IMR-90 (cell line): ENCODE measurements at regions of chr15 and their contacts with region 1.

Region 1: GRCh38 chr15:57138349-57138788 is 219.9 kb downstream of the TCF12 start:
- DNase-seq: peak; percentile 82
- ATAC-seq: peak; percentile 85
- H3K4me3 ChIP-seq: no peak overlapping the region
- H3K27ac ChIP-seq: no peak overlapping the region
- H3K4me1 ChIP-seq: peaks cover 3% of the 10 kb centered on the region; the same call in 1 of the 2 replicates
- H3K27me3 ChIP-seq: no peaks in the 10 kb centered on the region
- CTCF ChIP-seq: peak; percentile 72
- POLR2A ChIP-seq: no peak
- RAD21 ChIP-seq: peak; percentile 70

Region 2: GRCh38 chr15:56821721-56822425 is 316.5 kb before region 1 on chr15:
- CTCF ChIA-PET with region 1: no interaction called
- POLR2A ChIA-PET with region 1: no interaction called
- dilution Hi-C with region 1: no loop called
- in situ Hi-C with region 1: no loop called
- intact Hi-C with region 1: loop called (anchors 5 kb)
- DNase-seq: peak; percentile 77
- ATAC-seq: peak; percentile 95
- H3K4me3 ChIP-seq: no peak overlapping the region
- H3K27ac ChIP-seq: no peak overlapping the region
- H3K4me1 ChIP-seq: peaks cover 6% of the 10 kb centered on the region
- H3K27me3 ChIP-seq: no peaks in the 10 kb centered on the region
- CTCF ChIP-seq: peak; percentile 79
- POLR2A ChIP-seq: no peak
- RAD21 ChIP-seq: peak; percentile 85

Region 3: DNA sequence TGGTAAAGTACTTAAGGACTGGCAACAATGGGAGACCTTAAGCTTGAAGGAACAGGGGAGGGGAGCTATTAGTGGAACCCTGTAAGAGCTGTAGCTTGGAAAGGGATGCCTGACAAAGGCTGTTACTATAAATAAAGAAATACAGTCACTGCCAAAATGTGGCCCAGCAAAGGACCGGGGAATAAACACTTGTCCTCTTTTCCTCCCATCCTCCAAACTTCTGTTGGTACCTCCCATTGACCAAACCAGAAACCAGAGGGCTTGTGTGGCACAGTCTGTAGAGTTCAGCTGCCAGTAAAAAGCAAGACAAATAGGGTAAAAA is 245.1 kb before region 1 on chr15:
- CTCF ChIA-PET with region 1: no interaction called
- POLR2A ChIA-PET with region 1: no interaction called
- dilution Hi-C with region 1: no loop called
- in situ Hi-C with region 1: no loop called
- intact Hi-C with region 1: no loop called
- DNase-seq: no peak
- ATAC-seq: no peak
- H3K4me3 ChIP-seq: no peak overlapping the region
- H3K27ac ChIP-seq: no peak overlapping the region
- H3K4me1 ChIP-seq: no peaks in the 10 kb centered on the region
- H3K27me3 ChIP-seq: no peaks in the 10 kb centered on the region
- CTCF ChIP-seq: no peak
- POLR2A ChIP-seq: no peak
- RAD21 ChIP-seq: no peak

Region 4: GRCh38 chr15:58269455-58270414 is 1131.4 kb after region 1 on chr15:
- CTCF ChIA-PET with region 1: no interaction called
- POLR2A ChIA-PET with region 1: no interaction called
- dilution Hi-C with region 1: no loop called
- in situ Hi-C with region 1: no loop called
- intact Hi-C with region 1: no loop called
- DNase-seq: peak; percentile 71
- ATAC-seq: peak; percentile 98
- H3K4me3 ChIP-seq: no peak overlapping the region
- H3K27ac ChIP-seq: 0 out of 2 replicates have a peak overlapping the region, but pooled peaks have one; percentile 33
- H3K4me1 ChIP-seq: no peaks in the 10 kb centered on the region
- H3K27me3 ChIP-seq: 0 out of 2 replicates have a peak, but pooled peaks cover 1% of the 10 kb centered on the region
- CTCF ChIP-seq: peak; percentile 84
- POLR2A ChIP-seq: no peak
- RAD21 ChIP-seq: peak; percentile 95